Left lung (tissue), 14 donors: ENCODE measurements at regions of chr17 and their contacts with region 1.

Region 1: GRCh38 chr17:9138101-9138717 is 116.9 kb downstream of the NTN1 start:
- DNase-seq: peak in 1 of 4 donors; percentile 57
- ATAC-seq: no peak
- H3K4me3 ChIP-seq: no peak overlapping the region
- H3K27ac ChIP-seq: no peak overlapping the region
- H3K4me1 ChIP-seq: no peaks in the 10 kb centered on the region
- H3K27me3 ChIP-seq: no peaks in the 10 kb centered on the region
- CTCF ChIP-seq: no peak

Region 2: GRCh38 chr17:9195961-9196716 is 57.9 kb after region 1 on chr17:
- intact Hi-C with region 1: loop called in 1 of 2 experiments (anchors 10 kb)
- DNase-seq: peak in 2 of 4 donors; percentile 26 to 60
- ATAC-seq: no peak
- H3K4me3 ChIP-seq: no peak overlapping the region
- H3K27ac ChIP-seq: no peak overlapping the region
- H3K4me1 ChIP-seq: no peaks in the 10 kb centered on the region
- H3K27me3 ChIP-seq: no peaks in the 10 kb centered on the region
- CTCF ChIP-seq: no peak

Region 3: DNA sequence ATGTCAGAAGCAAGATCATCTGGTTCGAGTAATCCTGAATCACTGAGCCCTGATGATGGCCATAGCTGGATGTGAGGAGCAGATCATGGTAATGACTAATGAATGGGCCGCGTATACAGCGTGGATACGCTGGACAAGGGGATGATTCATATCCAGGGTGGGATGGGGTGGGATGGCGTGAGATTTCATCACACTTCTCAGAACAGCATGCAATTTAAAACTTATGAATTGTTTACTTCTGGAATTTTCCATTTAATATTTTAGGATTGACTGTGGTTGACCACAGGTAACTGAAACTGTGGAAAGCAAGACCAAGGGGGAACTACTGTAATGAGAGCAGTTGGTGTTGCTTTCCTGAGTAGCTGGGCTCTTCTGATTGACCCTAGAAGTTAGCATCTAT is 211.9 kb after region 1 on chr17:
- intact Hi-C with region 1: no loop called
- DNase-seq: no peak
- ATAC-seq: peak; percentile 35
- H3K4me3 ChIP-seq: no peak overlapping the region
- H3K27ac ChIP-seq: no peak overlapping the region
- H3K4me1 ChIP-seq: no peaks in the 10 kb centered on the region
- H3K27me3 ChIP-seq: no peaks in the 10 kb centered on the region
- CTCF ChIP-seq: no peak